Activated CD4-positive, alpha-beta T cell treated with anti-CD3 and anti-CD28 coated beads, Interleukin-2, amount 10 ng/mL, durations not matched to agents 7 days and 5 days (primary cell): ENCODE measurements at regions of chr14 and their contacts with region 1.

Region 1: GRCh38 chr14:23076785-23077408 is 18.0 kb downstream of the ACIN1 start:
- DNase-seq: peak; percentile 59
- H3K4me3 Mint-ChIP-seq: no peak overlapping the region
- H3K27ac Mint-ChIP-seq: no peak overlapping the region
- H3K4me1 Mint-ChIP-seq: peaks cover 5% of the 10 kb centered on the region
- H3K27me3 Mint-ChIP-seq: no peaks in the 10 kb centered on the region

Region 2: GRCh38 chr14:23095196-23096108 is 18.6 kb after region 1 on chr14 and contains the start of gene C14orf119:
- CTCF ChIA-PET with region 1: interaction called, 19 read pairs
- POLR2A ChIA-PET with region 1: interaction called, 3 read pairs
- DNase-seq: peak; percentile 100
- H3K4me3 Mint-ChIP-seq: no peak within 1 kb of the TSS
- H3K27ac Mint-ChIP-seq: no peak within 1 kb of the TSS
- H3K4me1 Mint-ChIP-seq: peaks cover 34% of the 10 kb centered on the region
- H3K27me3 Mint-ChIP-seq: no peaks in the 10 kb centered on the region
- total RNA-seq, gene C14orf119: 48.0 to 48.2 TPM